Caki2 (cell line): ENCODE measurements at regions of chr2 and their contacts with region 1.

Region 1: DNA sequence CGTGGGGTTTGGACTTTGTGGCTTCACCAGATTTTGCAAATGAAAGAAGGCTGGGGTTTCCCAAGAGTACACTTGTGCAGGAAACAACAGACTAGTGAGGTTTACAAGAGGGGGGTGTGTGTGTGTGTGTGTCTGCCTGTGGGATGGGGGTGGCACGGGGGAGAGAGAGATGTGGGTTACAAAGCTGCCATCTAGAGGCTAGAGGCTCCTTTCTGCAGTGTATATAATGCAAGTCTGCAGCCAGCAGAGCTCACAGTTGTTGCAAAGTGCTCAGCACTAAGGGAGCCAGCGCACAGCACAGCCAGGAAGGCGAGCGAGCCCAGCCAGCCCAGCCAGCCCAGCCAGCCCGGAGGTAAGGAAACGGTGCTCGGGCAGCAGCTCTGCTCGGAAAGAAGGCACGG is at the start of gene ACKR3:
- DNase-seq: peak; percentile 68
- total RNA-seq, gene ACKR3: 24.1 and 27.2 TPM in 2 replicates

Region 2: DNA sequence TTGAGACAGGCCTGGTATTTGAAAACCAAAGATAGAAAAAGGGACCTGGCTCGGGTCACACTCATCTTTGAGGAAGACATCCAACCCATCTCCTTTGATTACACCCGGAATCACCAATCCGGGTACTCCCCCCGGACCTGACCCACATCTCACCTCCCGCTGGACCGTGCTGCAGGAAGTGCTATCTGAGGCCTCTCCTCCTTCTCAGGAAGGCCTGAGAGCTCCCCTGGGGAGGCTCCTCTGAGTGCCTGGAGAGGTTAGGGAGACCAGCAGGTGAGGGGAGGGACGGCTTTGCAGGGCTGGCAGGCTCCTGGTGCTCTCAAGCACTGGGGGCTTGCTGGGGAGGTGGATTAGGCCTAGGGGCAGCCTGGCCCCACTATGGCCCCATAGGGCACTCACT is 170.9 kb after region 1 on chr2:
- in situ Hi-C with region 1: no loop called
- DNase-seq: no peak

Region 3: GRCh38 chr2:236765478-236765877 is 195.9 kb after region 1 on chr2:
- in situ Hi-C with region 1: no loop called
- DNase-seq: no peak

Region 4: GRCh38 chr2:237012577-237013267 is 443.1 kb after region 1 on chr2:
- in situ Hi-C with region 1: loop called (anchors 25 kb)
- DNase-seq: no peak